ENCODE measurements at regions of chr3 and their contacts with region 1.

Region 1: GRCh38 chr3:31531992-31532586 is 636 bp upstream of the STT3B start:
- DNase-seq: peak; percentile 98
- ATAC-seq: peak; percentile 93
- H3K4me3 ChIP-seq: peak overlapping the region; percentile 77
- H3K27ac ChIP-seq: peak overlapping the region; percentile 95
- H3K4me1 ChIP-seq: no peaks in the 10 kb centered on the region
- H3K27me3 ChIP-seq: no peaks in the 10 kb centered on the region
- CTCF ChIP-seq: no peak
- POLR2A ChIP-seq: peak; percentile 70; the same call in 1 of the 2 replicates
- RAD21 ChIP-seq: no peak

Region 2: DNA sequence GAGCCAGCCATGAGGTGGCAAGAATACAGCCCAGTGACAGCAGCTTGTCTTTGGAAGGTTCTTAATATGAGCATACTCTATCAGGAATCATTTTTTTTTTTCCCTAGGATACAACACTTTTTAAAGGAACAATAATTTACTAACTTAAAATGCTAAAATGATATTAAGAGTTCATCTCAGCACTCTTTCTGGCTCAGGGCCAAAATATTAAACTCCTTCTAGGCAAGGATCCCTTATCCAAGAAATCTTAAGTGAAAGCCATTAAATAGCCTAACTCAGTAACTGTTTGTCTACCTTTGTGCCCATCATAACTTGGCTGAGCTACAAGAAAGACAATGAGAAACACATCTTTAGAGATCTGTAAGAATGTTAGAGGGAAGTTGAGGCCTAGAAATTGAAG is 1455.2 kb before region 1 on chr3:
- CTCF ChIA-PET with region 1: interaction called, 12 read pairs
- POLR2A ChIA-PET with region 1: no interaction called
- dilution Hi-C with region 1: no loop called
- in situ Hi-C with region 1: no loop called
- intact Hi-C with region 1: no loop called
- DNase-seq: no peak
- ATAC-seq: no peak
- H3K4me3 ChIP-seq: no peak overlapping the region
- H3K27ac ChIP-seq: no peak overlapping the region
- H3K4me1 ChIP-seq: no peaks in the 10 kb centered on the region
- H3K27me3 ChIP-seq: no peaks in the 10 kb centered on the region
- CTCF ChIP-seq: no peak
- POLR2A ChIP-seq: no peak
- RAD21 ChIP-seq: no peak

Region 3: DNA sequence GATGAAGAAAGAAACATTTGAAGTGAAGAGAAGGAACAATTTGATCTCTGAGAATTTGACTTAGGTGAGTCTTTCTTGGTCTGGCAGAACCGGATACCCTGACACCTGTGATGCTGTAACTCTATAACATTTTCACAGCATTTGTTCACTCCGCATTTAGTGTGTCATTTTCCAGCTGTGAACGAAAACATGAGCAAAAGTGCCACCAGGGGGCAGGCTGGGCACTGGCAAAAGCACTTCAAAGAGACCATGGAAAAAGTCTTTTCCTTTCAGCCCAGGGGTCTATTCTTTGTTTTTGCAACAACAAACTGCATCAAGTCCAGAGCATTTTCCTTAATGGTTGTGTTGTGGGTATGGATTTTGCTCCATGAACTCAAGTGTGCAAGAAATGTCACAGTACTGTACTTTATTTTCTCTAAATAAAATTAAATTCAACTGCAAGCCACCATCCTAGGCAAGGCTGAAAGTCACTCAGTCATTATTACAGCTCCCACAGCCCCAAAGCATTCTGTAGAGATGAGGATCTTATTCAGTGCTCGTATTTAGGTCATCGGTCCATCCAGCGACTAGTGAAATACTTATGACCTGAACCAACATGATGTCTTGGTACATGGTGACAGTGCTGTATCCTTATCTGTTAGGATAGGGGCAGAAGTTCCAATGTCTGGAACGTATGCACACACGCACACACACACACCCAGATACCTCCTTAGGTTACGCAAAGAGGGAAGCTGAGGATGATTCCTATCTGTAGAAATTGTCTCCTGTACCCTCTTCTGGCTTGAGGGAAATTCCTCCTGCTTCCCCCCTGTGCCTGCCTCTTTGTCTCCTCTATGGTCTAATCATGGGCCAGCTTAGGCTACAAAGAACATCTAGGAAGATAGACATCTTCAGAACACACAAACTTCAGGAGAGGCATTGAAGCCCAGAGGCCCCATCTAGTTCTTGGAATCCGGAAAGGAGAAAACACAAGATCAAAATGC is 763.1 kb before region 1 on chr3:
- CTCF ChIA-PET with region 1: no interaction called
- POLR2A ChIA-PET with region 1: no interaction called
- dilution Hi-C with region 1: no loop called
- in situ Hi-C with region 1: no loop called
- intact Hi-C with region 1: loop called (anchors 5 kb)
- DNase-seq: peak; percentile 58
- ATAC-seq: peak; percentile 52
- H3K4me3 ChIP-seq: no peak overlapping the region
- H3K27ac ChIP-seq: no peak overlapping the region
- H3K4me1 ChIP-seq: 0 out of 2 replicates have a peak, but pooled peaks cover 2% of the 10 kb centered on the region
- H3K27me3 ChIP-seq: no peaks in the 10 kb centered on the region; the same call in 1 of the 2 replicates
- CTCF ChIP-seq: peak; percentile 75
- POLR2A ChIP-seq: no peak
- RAD21 ChIP-seq: peak; percentile 68

Region 4: GRCh38 chr3:31105438-31106077 is 426.5 kb before region 1 on chr3:
- CTCF ChIA-PET with region 1: no interaction called
- POLR2A ChIA-PET with region 1: no interaction called
- dilution Hi-C with region 1: no loop called
- in situ Hi-C with region 1: no loop called
- intact Hi-C with region 1: loop called (anchors 10 kb)
- DNase-seq: peak; percentile 95
- ATAC-seq: peak; percentile 90
- H3K4me3 ChIP-seq: no peak overlapping the region
- H3K27ac ChIP-seq: no peak overlapping the region
- H3K4me1 ChIP-seq: peaks cover 3% of the 10 kb centered on the region; the same call in 1 of the 2 replicates
- H3K27me3 ChIP-seq: no peaks in the 10 kb centered on the region; the same call in 1 of the 2 replicates
- CTCF ChIP-seq: no peak
- POLR2A ChIP-seq: no peak
- RAD21 ChIP-seq: no peak

Region 5: GRCh38 chr3:31166249-31166885 is 365.7 kb before region 1 on chr3:
- CTCF ChIA-PET with region 1: no interaction called
- POLR2A ChIA-PET with region 1: no interaction called
- dilution Hi-C with region 1: no loop called
- in situ Hi-C with region 1: no loop called
- intact Hi-C with region 1: loop called (anchors 5 kb)
- DNase-seq: peak; percentile 84
- ATAC-seq: peak; percentile 77
- H3K4me3 ChIP-seq: no peak overlapping the region
- H3K27ac ChIP-seq: no peak overlapping the region
- H3K4me1 ChIP-seq: peaks cover 14% of the 10 kb centered on the region
- H3K27me3 ChIP-seq: no peaks in the 10 kb centered on the region
- CTCF ChIP-seq: no peak
- POLR2A ChIP-seq: no peak
- RAD21 ChIP-seq: no peak

Region 6: GRCh38 chr3:31361371-31362273 is 170.5 kb before region 1 on chr3:
- CTCF ChIA-PET with region 1: no interaction called
- POLR2A ChIA-PET with region 1: no interaction called
- dilution Hi-C with region 1: no loop called
- in situ Hi-C with region 1: no loop called
- intact Hi-C with region 1: loop called (anchors 1 kb)
- DNase-seq: peak; percentile 86
- ATAC-seq: peak; percentile 74
- H3K4me3 ChIP-seq: peak overlapping the region; percentile 16; the same call in 1 of the 2 replicates
- H3K27ac ChIP-seq: peak overlapping the region; percentile 23; the same call in 1 of the 2 replicates
- H3K4me1 ChIP-seq: peaks cover 10% of the 10 kb centered on the region
- H3K27me3 ChIP-seq: no peaks in the 10 kb centered on the region
- CTCF ChIP-seq: no peak
- POLR2A ChIP-seq: no peak
- RAD21 ChIP-seq: no peak

Region 7: DNA sequence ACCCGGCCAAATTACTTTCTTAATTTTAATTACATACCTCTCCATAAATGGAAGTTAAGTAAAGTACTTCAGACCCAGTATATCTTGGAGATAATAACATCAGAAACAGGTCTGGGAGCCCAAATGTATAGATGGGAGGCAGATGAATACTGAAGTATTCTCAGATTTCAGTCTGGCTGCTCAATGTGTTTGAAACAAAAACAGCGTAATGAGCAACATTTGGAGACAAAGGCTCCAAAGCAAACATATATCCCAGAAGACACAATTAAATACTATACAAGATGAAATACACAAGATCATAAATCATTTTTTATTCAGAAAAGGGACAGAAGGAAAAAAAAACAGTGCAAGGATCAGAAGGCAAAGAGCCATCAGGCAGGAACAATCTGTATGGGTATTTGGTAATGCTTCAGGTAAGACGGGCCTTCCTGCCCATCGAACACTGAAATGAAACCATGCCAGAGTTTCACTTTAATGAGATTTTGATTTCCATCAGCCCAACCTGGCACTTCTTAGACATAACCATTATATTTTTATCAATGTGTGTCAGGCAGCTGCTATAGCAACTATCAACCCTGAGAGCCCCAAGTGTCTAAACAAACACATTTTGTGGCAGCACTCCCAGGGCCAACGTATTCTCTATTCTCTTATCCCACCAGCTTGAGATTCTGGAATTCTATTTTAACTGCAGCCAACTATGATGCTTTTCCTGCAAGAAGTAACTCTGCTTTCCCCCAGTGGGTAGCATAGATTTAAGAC is 211.4 kb after region 1 on chr3:
- CTCF ChIA-PET with region 1: no interaction called
- POLR2A ChIA-PET with region 1: no interaction called
- dilution Hi-C with region 1: no loop called
- in situ Hi-C with region 1: no loop called
- intact Hi-C with region 1: no loop called
- DNase-seq: peak; percentile 25
- ATAC-seq: no peak
- H3K4me3 ChIP-seq: no peak overlapping the region
- H3K27ac ChIP-seq: no peak overlapping the region
- H3K4me1 ChIP-seq: no peaks in the 10 kb centered on the region; the same call in 1 of the 2 replicates
- H3K27me3 ChIP-seq: no peaks in the 10 kb centered on the region
- CTCF ChIP-seq: no peak
- POLR2A ChIP-seq: no peak
- RAD21 ChIP-seq: no peak

Region 8: GRCh38 chr3:31968927-31969418 is 436.9 kb after region 1 on chr3:
- CTCF ChIA-PET with region 1: no interaction called
- POLR2A ChIA-PET with region 1: no interaction called
- dilution Hi-C with region 1: no loop called
- in situ Hi-C with region 1: no loop called
- intact Hi-C with region 1: loop called (anchors 1 kb)
- DNase-seq: peak; percentile 93
- ATAC-seq: peak; percentile 91
- H3K4me3 ChIP-seq: no peak overlapping the region
- H3K27ac ChIP-seq: peak overlapping the region; percentile 89
- H3K4me1 ChIP-seq: peaks cover 10% of the 10 kb centered on the region
- H3K27me3 ChIP-seq: no peaks in the 10 kb centered on the region
- CTCF ChIP-seq: no peak
- POLR2A ChIP-seq: no peak
- RAD21 ChIP-seq: no peak

Measured in IMR-90 (cell line).